ENCODE measurements at regions of chr4 and their contacts with region 1.

Region 1: DNA sequence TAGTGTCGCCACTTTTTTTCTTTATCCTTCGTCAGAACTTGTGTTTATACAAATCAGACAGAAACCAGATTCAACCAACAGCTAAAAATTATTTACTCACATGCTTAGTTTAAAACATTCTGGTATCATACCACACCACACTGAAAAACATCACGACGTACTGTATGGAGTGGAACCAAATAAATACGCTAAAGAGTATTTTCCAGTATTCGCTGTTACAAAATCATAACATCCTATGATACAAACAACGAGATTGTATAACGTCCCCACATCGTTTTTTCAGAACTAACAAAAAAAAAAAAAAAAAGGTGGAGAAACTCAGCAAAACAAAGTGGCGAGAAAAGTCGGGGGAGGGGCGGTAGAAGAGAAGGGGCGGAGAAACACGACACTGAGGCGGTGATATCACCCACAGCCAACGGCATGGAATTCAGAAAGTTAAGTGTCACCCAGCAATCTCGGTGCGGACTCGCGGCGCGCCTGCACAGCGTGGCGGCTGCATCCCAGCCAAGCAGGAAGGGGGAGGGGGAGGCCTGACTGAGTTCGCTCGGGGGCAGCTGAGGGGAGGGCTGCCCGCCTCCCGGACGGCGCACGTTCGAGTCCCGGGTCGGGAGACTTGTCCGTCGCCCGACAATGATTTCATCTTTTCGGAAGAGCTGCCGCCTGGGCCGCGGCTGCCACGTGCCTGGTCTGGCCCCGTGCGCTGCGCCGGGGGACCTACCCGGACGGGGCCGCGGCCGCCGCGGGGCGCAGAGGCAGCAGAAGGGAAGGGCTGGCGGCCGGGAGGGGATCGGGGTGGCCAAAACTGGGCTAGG is 920 bp downstream of the SETD7 start:
- DNase-seq: peak; percentile 65 to 93 (median 88)
- ATAC-seq: peak; percentile 85
- H3K4me3 ChIP-seq: peak overlapping the region; percentile 68
- H3K4me3 Mint-ChIP-seq: peak overlapping the region; percentile 89 to 99 (median 98)
- H3K27ac ChIP-seq: peak overlapping the region; percentile 76
- H3K27ac Mint-ChIP-seq: peak overlapping the region; percentile 86 to 98 (median 97)
- H3K4me1 ChIP-seq: peaks cover 4 to 11% of the 10 kb centered on the region in 2 donors
- H3K4me1 Mint-ChIP-seq: peaks cover 19 to 49% (median 40%) of the 10 kb centered on the region in 7 donors
- H3K27me3 ChIP-seq: no peaks in the 10 kb centered on the region
- H3K27me3 Mint-ChIP-seq: peaks cover 0 to 11% (median 0%) of the 10 kb centered on the region in 5 donors

Region 2: GRCh38 chr4:139083956-139084803 is 470.9 kb before region 1 on chr4:
- CTCF ChIA-PET with region 1: no interaction called
- POLR2A ChIA-PET with region 1: interaction called, 7 read pairs
- intact Hi-C with region 1: loop called (anchors 1 to 2 kb)
- DNase-seq: peak; percentile 54 to 88 (median 84)
- ATAC-seq: peak; percentile 64
- H3K4me3 ChIP-seq: peak overlapping the region; percentile 99
- H3K4me3 Mint-ChIP-seq: peak overlapping the region; percentile 90 to 100 (median 92)
- H3K27ac ChIP-seq: peak overlapping the region; percentile 96
- H3K27ac Mint-ChIP-seq: peak overlapping the region; percentile 85 to 100 (median 96)
- H3K4me1 ChIP-seq: peaks cover 16 to 27% of the 10 kb centered on the region in 2 donors
- H3K4me1 Mint-ChIP-seq: peaks cover 16 to 49% (median 41%) of the 10 kb centered on the region in 7 donors
- H3K27me3 ChIP-seq: no peaks in the 10 kb centered on the region
- H3K27me3 Mint-ChIP-seq: no peaks in the 10 kb centered on the region

Region 3: DNA sequence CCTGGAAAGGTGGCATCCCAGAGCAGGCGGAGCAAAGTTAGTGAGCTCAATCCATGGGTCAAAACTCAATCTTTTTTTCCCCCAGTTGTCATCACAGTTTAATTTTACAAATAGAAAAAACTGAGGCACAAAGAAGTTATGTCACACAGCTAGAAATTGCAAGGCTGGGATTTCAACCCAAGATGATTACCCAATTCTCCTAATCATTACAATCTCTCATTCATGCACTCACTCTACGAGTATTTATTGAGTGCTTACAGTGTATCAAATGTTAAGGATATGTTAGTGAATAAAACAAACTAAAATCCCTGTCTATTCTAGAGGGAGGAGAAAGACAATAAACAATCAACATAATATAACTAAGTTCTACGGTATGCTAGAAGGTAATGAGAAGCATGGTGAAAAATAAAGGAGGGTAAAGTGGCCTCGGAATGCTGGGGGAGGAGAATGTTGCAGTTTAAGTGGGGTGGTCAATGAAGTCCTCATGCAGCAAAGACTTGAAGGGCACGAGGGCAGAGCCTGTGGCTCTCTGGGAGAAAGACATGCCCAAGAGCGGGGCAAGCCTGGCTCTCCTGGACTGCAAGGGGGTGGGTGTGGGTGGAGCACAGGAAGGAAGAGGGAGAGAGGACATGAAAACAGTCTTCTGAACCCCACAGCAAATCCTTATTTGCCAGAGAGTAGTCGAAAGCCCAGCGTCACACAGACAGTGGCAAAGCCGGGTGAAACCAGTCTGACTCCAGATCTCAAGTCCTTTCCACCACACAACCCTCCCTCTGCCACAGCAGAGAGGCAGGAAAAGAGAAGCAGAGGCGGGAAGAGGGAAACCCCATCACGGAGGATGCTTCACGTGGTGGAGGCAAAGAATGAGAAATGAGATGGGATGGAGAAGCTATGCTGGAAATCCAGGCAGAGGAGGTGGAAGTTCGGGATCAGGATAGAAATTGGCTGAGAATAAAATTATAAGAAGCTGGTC is 52.9 kb before region 1 on chr4:
- CTCF ChIA-PET with region 1: no interaction called
- POLR2A ChIA-PET with region 1: interaction called, 4 read pairs
- intact Hi-C with region 1: loop called in 1 of 2 experiments (anchors 2 kb)
- DNase-seq: no peak
- ATAC-seq: no peak
- H3K4me3 ChIP-seq: no peak overlapping the region
- H3K4me3 Mint-ChIP-seq: no peak overlapping the region
- H3K27ac ChIP-seq: no peak overlapping the region
- H3K27ac Mint-ChIP-seq: no peak overlapping the region
- H3K4me1 ChIP-seq: no peaks in the 10 kb centered on the region
- H3K4me1 Mint-ChIP-seq: peaks cover 0 to 7% (median 0%) of the 10 kb centered on the region in 7 donors
- H3K27me3 ChIP-seq: no peaks in the 10 kb centered on the region
- H3K27me3 Mint-ChIP-seq: peaks cover 0 to 7% (median 5%) of the 10 kb centered on the region in 5 donors

Region 4: DNA sequence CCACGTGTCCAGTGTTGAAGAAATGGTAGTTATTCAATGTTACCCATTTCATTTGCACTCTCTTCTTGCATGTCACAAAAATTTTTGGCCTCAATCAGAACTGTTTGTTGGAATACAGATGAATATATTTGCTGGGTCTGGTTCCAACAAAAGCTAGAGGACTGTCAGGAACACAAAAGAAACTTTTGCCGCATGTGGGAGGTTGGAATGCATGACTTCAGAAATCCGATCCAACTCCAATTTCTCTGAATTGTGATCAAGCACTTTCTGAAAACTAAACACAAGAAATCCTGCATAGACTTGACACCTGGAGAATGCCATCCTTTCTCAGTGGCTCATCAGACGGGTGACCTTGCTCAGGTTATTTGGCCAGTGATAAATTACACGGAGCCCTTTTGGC is 14.5 kb before region 1 on chr4:
- CTCF ChIA-PET with region 1: interaction called, 5 read pairs
- POLR2A ChIA-PET with region 1: interaction called, 11 read pairs
- intact Hi-C with region 1: no loop called
- DNase-seq: no peak
- ATAC-seq: no peak
- H3K4me3 ChIP-seq: no peak overlapping the region
- H3K4me3 Mint-ChIP-seq: no peak overlapping the region
- H3K27ac ChIP-seq: no peak overlapping the region
- H3K27ac Mint-ChIP-seq: no peak overlapping the region
- H3K4me1 ChIP-seq: no peaks in the 10 kb centered on the region
- H3K4me1 Mint-ChIP-seq: peaks cover 0 to 5% (median 0%) of the 10 kb centered on the region in 7 donors
- H3K27me3 ChIP-seq: no peaks in the 10 kb centered on the region
- H3K27me3 Mint-ChIP-seq: no peaks in the 10 kb centered on the region

Region 5: DNA sequence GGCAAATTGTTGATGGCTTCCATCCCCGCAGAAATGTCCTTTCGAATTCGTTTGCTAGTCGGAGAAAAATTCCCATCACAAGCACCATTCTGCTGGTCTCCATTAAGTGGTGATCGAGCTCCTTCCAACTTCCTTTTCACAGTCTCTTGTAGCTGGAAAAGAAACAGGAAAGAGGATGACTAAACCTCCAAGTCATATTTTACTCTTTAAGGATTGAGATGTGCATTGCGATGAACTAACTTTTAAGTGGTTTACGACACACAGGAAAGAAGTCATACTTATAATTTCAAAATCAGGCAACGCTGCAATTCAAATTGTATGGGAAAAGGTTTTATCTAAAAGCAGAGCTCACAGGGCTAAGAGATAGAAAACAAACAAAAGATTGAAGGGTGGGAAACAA is 335.7 kb after region 1 on chr4:
- CTCF ChIA-PET with region 1: no interaction called
- POLR2A ChIA-PET with region 1: no interaction called
- intact Hi-C with region 1: no loop called
- DNase-seq: no peak
- ATAC-seq: peak; percentile 55
- H3K4me3 ChIP-seq: no peak overlapping the region
- H3K4me3 Mint-ChIP-seq: no peak overlapping the region
- H3K27ac ChIP-seq: no peak overlapping the region
- H3K27ac Mint-ChIP-seq: no peak overlapping the region
- H3K4me1 ChIP-seq: no peaks in the 10 kb centered on the region
- H3K4me1 Mint-ChIP-seq: peaks cover 0 to 7% (median 0%) of the 10 kb centered on the region in 7 donors
- H3K27me3 ChIP-seq: no peaks in the 10 kb centered on the region
- H3K27me3 Mint-ChIP-seq: peaks cover 0 to 4% (median 0%) of the 10 kb centered on the region in 5 donors

Region 6: DNA sequence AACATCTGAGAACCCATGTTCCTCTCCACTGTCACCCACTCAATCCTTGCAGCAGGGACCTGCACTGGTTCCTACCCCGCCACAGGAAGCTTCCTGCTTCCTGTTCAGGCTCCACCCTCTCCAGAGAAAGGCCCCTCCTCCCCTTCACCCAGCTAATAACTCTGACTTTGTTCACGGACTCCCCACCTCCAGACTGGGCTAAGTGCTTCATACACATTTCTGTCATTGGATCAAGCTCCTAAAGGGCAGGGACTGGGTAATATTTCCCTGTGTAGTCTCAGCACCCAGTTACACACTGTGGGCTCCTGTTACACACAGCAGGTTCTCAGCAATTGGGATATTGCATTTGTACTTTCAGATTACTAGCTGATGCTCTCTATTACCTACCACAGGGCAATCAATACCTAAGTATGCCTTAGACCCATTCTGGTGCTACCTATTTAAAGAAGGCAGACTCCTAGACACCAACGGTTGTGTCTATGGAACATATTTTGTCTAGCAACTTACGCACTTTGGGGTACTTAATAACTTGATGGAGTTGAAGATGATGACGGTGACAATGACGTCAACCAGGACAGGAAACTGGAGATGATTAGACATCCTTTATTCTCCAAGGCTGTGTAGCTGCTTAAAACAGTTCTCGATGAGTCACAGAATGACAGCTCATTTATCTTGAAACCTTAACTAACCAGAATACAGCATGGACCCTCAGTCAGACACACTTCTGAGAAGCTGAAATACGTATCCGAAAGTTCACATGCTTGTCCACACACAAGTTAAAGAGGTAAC is 540.8 kb after region 1 on chr4:
- CTCF ChIA-PET with region 1: no interaction called
- POLR2A ChIA-PET with region 1: no interaction called
- intact Hi-C with region 1: loop called in 1 of 2 experiments (anchors 10 kb)
- DNase-seq: peak in 8 of 9 donors; percentile 46 to 92 (median 71)
- ATAC-seq: peak; percentile 73
- H3K4me3 ChIP-seq: peak overlapping the region; percentile 39
- H3K4me3 Mint-ChIP-seq: peak overlapping the region; percentile 68 to 97 (median 88)
- H3K27ac ChIP-seq: peak overlapping the region; percentile 73
- H3K27ac Mint-ChIP-seq: peak overlapping the region; percentile 90 to 99 (median 95)
- H3K4me1 ChIP-seq: peaks cover 5 to 53% of the 10 kb centered on the region in 2 donors
- H3K4me1 Mint-ChIP-seq: peaks cover 51 to 83% (median 75%) of the 10 kb centered on the region in 7 donors
- H3K27me3 ChIP-seq: no peaks in the 10 kb centered on the region
- H3K27me3 Mint-ChIP-seq: peaks cover 0 to 2% (median 0%) of the 10 kb centered on the region in 5 donors